Esophagus muscularis mucosa (tissue), 4 donors: ENCODE measurements at regions of chr19 and their contacts with region 1.

Region 1: GRCh38 chr19:48582168-48582567 is 24.4 kb upstream of the SPACA4 start:
- DNase-seq: no peak
- H3K4me3 ChIP-seq: no peak overlapping the region
- H3K27ac ChIP-seq: no peak overlapping the region
- H3K4me1 ChIP-seq: peaks cover 6 to 8% (median 8%) of the 10 kb centered on the region in 4 donors
- H3K27me3 ChIP-seq: no peaks in the 10 kb centered on the region
- CTCF ChIP-seq: no peak
- EP300 ChIP-seq: no peak
- POLR2A ChIP-seq: no peak

Region 2: GRCh38 chr19:48321622-48322591 is 260.3 kb before region 1 on chr19:
- intact Hi-C with region 1: no loop called
- DNase-seq: peak; percentile 100
- H3K4me3 ChIP-seq: peak overlapping the region; percentile 54 to 63 (median 59)
- H3K27ac ChIP-seq: peak overlapping the region; percentile 89 to 99 (median 94)
- H3K4me1 ChIP-seq: peaks cover 41 to 60% (median 56%) of the 10 kb centered on the region in 4 donors
- H3K27me3 ChIP-seq: no peaks in the 10 kb centered on the region
- CTCF ChIP-seq: peak in 2 of 3 experiments; percentile 22 to 31
- EP300 ChIP-seq: no peak
- POLR2A ChIP-seq: peak; percentile 25

Region 3: GRCh38 chr19:48506138-48506733 is 75.9 kb before region 1 on chr19:
- intact Hi-C with region 1: loop called (anchors 5 kb)
- DNase-seq: no peak
- H3K4me3 ChIP-seq: no peak overlapping the region
- H3K27ac ChIP-seq: no peak overlapping the region
- H3K4me1 ChIP-seq: peaks cover 6 to 22% (median 18%) of the 10 kb centered on the region in 4 donors
- H3K27me3 ChIP-seq: peaks cover 0 to 32% (median 17%) of the 10 kb centered on the region in 4 donors
- CTCF ChIP-seq: peak; percentile 34 to 37 (median 34)
- EP300 ChIP-seq: no peak
- POLR2A ChIP-seq: no peak